Activated CD8-positive, alpha-beta T cell treated with anti-CD3 and anti-CD28 coated beads for 36 hours (primary cell): ENCODE measurements at regions of chr5 and their contacts with region 1.

Region 1: GRCh38 chr5:35857606-35858205 is 1.0 kb downstream of the IL7R start:
- DNase-seq: no peak
- ATAC-seq: no peak
- H3K4me3 Mint-ChIP-seq: peak overlapping the region; percentile 95
- H3K27ac Mint-ChIP-seq: peak overlapping the region; percentile 99
- H3K4me1 Mint-ChIP-seq: peaks cover 67% of the 10 kb centered on the region
- H3K27me3 Mint-ChIP-seq: no peaks in the 10 kb centered on the region
- CTCF ChIP-seq: no peak

Region 2: DNA sequence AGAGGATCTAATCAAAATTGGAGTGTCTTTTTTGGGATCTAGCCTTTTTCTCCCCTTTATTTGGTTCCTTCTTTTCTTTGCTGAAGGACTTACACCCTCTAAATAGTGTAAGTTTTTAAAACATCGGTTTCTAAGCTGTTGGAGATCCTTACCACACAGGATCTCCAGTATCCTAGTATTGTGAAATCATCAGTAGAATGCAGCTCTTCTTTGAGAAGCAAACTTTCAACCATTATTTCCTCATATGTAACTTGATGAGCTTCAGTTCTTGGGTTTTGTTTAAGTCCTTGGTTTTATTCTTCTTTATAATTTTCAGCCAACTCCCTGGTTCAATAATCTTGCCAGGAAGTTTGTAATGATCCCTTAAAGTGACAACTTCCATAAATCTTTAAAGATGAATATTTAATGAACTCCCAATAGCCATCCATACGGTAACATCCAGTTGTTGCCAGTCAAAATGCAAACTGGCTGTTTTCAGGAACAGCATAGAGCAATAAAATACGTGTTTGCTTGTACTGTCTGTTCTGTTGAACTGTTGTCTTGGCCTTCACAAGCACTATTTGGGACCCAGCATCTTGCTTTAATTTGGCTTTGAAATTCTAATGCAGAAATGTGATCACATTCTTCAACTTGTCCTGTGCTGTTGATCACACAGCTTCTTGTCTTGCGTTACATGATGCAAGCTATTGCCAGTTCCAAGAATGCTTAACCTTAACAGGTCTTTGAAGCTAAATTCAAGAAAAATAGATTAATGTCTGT is 1053.6 kb before region 1 on chr5:
- CTCF ChIA-PET with region 1: no interaction called
- POLR2A ChIA-PET with region 1: no interaction called
- intact Hi-C with region 1: no loop called
- DNase-seq: no peak
- ATAC-seq: no peak
- H3K4me3 Mint-ChIP-seq: no peak overlapping the region
- H3K27ac Mint-ChIP-seq: no peak overlapping the region
- H3K4me1 Mint-ChIP-seq: no peaks in the 10 kb centered on the region
- H3K27me3 Mint-ChIP-seq: no peaks in the 10 kb centered on the region
- CTCF ChIP-seq: no peak

Region 3: GRCh38 chr5:35822511-35822910 is 35.2 kb before region 1 on chr5:
- CTCF ChIA-PET with region 1: interaction called, 14 read pairs
- POLR2A ChIA-PET with region 1: interaction called, 241 read pairs
- intact Hi-C with region 1: loop called (anchors 5 kb)
- DNase-seq: peak; percentile 82
- ATAC-seq: peak; percentile 28
- H3K4me3 Mint-ChIP-seq: peak overlapping the region; percentile 55
- H3K27ac Mint-ChIP-seq: peak overlapping the region; percentile 92
- H3K4me1 Mint-ChIP-seq: peaks cover 87% of the 10 kb centered on the region
- H3K27me3 Mint-ChIP-seq: no peaks in the 10 kb centered on the region
- CTCF ChIP-seq: no peak

Region 4: DNA sequence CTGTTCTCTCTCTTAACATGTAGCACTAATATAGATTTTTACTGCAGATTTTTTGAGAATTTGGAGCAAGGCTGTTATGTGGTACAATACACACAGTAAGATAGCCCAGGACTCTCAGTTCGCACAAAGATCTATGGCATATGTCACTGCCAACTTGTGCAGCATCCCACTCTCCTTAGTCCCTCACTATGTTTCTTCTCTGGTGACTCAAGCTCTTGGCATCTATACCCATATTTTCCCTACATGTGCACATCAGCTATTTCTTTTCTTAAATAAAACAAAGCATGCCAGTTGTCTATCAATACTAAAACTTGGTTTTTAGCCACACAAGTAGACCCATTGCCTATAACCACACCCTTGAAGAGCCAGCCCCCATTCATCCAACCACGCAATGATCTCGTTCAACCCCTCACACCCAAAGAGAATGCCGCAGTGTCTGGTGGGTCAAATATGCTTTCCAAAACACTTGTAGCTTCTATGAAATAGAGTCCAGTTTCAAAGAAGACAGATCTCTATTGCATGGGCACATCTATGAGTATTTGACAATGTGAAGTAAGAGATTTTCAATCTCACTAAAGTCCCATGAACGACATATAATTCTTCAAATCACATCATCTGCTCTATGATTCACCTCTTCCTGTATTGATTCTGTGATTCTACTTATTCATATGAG is 19.2 kb before region 1 on chr5:
- CTCF ChIA-PET with region 1: interaction called, 10 read pairs
- POLR2A ChIA-PET with region 1: interaction called, 81 read pairs
- intact Hi-C with region 1: loop called (anchors 2 kb)
- DNase-seq: peak; percentile 78
- ATAC-seq: peak; percentile 75
- H3K4me3 Mint-ChIP-seq: peak overlapping the region; percentile 37
- H3K27ac Mint-ChIP-seq: peak overlapping the region; percentile 91
- H3K4me1 Mint-ChIP-seq: peaks cover 72% of the 10 kb centered on the region
- H3K27me3 Mint-ChIP-seq: no peaks in the 10 kb centered on the region
- CTCF ChIP-seq: no peak

Region 5: GRCh38 chr5:35876921-35877320 is 19.2 kb after region 1 on chr5:
- CTCF ChIA-PET with region 1: interaction called, 11 read pairs
- POLR2A ChIA-PET with region 1: interaction called, 15 read pairs
- intact Hi-C with region 1: no loop called
- DNase-seq: no peak
- ATAC-seq: peak; percentile 45
- H3K4me3 Mint-ChIP-seq: no peak overlapping the region
- H3K27ac Mint-ChIP-seq: peak overlapping the region; percentile 78
- H3K4me1 Mint-ChIP-seq: peaks cover 80% of the 10 kb centered on the region
- H3K27me3 Mint-ChIP-seq: no peaks in the 10 kb centered on the region
- CTCF ChIP-seq: no peak